GM12878 (cell line): ENCODE measurements at regions of chr7 and their contacts with region 1.

Region 1: GRCh38 chr7:149497456-149498261 is at the start of gene ZNF746:
- DNase-seq: peak; percentile 11
- ATAC-seq: peak; percentile 93
- H3K4me3 ChIP-seq: peak within 1 kb of the TSS; percentile 87
- H3K27ac ChIP-seq: peak within 1 kb of the TSS; percentile 67
- H3K4me1 ChIP-seq: peaks cover 14% of the 10 kb centered on the region
- H3K27me3 ChIP-seq: no peaks in the 10 kb centered on the region
- CTCF ChIP-seq: peak; percentile 55 to 83 (median 70)
- EP300 ChIP-seq: no peak
- POLR2A ChIP-seq: peak; percentile 76
- RAD21 ChIP-seq: peak; percentile 59
- polyA plus RNA-seq, gene ZNF746: 1.2 to 1.3 TPM

Region 2: GRCh38 chr7:149202831-149203231 is 294.8 kb before region 1 on chr7:
- CTCF ChIA-PET with region 1: no interaction called
- POLR2A ChIA-PET with region 1: no interaction called
- RAD21 ChIA-PET with region 1: no interaction called
- SMC1A ChIA-PET with region 1: no interaction called
- in situ Hi-C with region 1: no loop called
- intact Hi-C with region 1: no loop called
- DNase-seq: no peak
- ATAC-seq: no peak
- H3K4me3 ChIP-seq: no peak overlapping the region
- H3K27ac ChIP-seq: no peak overlapping the region
- H3K4me1 ChIP-seq: no peaks in the 10 kb centered on the region
- H3K27me3 ChIP-seq: no peaks in the 10 kb centered on the region
- CTCF ChIP-seq: no peak
- EP300 ChIP-seq: no peak
- POLR2A ChIP-seq: no peak
- RAD21 ChIP-seq: no peak

Region 3: DNA sequence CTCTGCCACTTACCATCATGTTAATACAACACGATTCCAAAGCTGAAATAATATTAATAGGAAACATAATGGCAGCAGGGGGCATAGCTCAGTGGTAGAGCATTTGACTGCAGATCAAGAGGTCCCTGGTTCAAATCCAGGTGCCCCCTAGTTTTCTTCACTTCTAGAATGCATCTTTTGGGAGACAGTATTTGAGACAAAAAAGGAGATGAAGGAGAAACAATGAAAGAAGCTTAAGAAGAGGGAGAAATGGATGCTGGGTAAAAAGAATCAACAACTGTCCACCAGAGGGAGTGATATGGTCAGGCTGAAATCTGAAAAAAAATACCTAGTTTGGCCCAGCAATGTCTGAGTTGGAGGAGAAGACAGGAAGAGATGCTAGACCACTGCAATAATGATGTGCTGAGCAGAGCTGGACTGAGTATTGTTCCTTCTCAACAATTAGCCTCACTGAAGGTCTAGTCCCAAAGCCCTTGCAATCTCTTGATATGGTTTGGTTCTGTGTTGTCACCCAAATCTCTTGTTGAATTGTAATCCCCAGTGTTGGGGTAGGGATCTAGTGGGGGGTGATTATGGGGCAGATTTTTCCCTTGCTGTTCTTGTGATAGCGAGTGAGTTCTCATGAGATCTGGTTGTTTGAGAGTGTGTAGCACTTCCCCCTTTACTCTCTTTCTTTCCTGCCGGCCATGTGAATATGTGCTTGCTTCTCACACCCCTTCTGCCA is 187.4 kb before region 1 on chr7:
- CTCF ChIA-PET with region 1: interaction called, 4 read pairs
- POLR2A ChIA-PET with region 1: no interaction called
- RAD21 ChIA-PET with region 1: no interaction called
- SMC1A ChIA-PET with region 1: interaction called, 7 read pairs
- in situ Hi-C with region 1: no loop called
- intact Hi-C with region 1: loop called (anchors 5 kb)
- DNase-seq: peak; percentile 36
- ATAC-seq: peak; percentile 86
- H3K4me3 ChIP-seq: no peak overlapping the region
- H3K27ac ChIP-seq: no peak overlapping the region
- H3K4me1 ChIP-seq: no peaks in the 10 kb centered on the region
- H3K27me3 ChIP-seq: no peaks in the 10 kb centered on the region
- CTCF ChIP-seq: peak; percentile 40 to 58 (median 42); a peak in 5 of 6 replicates
- EP300 ChIP-seq: no peak
- POLR2A ChIP-seq: no peak
- RAD21 ChIP-seq: peak; percentile 52

Region 4: GRCh38 chr7:149460493-149461277 is 37.0 kb before region 1 on chr7 and contains the start of gene ZNF777:
- CTCF ChIA-PET with region 1: no interaction called
- POLR2A ChIA-PET with region 1: no interaction called
- RAD21 ChIA-PET with region 1: interaction called, 3 read pairs
- SMC1A ChIA-PET with region 1: interaction called, 3 read pairs
- in situ Hi-C with region 1: no loop called
- intact Hi-C with region 1: loop called (anchors 2 kb)
- DNase-seq: peak; percentile 34
- ATAC-seq: peak; percentile 99
- H3K4me3 ChIP-seq: peak within 1 kb of the TSS; percentile 73
- H3K27ac ChIP-seq: peak within 1 kb of the TSS; percentile 54
- H3K4me1 ChIP-seq: 0 out of 2 replicates have a peak, but pooled peaks cover 6% of the 10 kb centered on the region
- H3K27me3 ChIP-seq: no peaks in the 10 kb centered on the region
- CTCF ChIP-seq: peak; percentile 47 to 66 (median 61); a peak in 5 of 6 replicates
- EP300 ChIP-seq: no peak
- POLR2A ChIP-seq: peak; percentile 83
- RAD21 ChIP-seq: no peak
- polyA plus RNA-seq, gene ZNF777: 0.03 to 0.13 TPM

Region 5: DNA sequence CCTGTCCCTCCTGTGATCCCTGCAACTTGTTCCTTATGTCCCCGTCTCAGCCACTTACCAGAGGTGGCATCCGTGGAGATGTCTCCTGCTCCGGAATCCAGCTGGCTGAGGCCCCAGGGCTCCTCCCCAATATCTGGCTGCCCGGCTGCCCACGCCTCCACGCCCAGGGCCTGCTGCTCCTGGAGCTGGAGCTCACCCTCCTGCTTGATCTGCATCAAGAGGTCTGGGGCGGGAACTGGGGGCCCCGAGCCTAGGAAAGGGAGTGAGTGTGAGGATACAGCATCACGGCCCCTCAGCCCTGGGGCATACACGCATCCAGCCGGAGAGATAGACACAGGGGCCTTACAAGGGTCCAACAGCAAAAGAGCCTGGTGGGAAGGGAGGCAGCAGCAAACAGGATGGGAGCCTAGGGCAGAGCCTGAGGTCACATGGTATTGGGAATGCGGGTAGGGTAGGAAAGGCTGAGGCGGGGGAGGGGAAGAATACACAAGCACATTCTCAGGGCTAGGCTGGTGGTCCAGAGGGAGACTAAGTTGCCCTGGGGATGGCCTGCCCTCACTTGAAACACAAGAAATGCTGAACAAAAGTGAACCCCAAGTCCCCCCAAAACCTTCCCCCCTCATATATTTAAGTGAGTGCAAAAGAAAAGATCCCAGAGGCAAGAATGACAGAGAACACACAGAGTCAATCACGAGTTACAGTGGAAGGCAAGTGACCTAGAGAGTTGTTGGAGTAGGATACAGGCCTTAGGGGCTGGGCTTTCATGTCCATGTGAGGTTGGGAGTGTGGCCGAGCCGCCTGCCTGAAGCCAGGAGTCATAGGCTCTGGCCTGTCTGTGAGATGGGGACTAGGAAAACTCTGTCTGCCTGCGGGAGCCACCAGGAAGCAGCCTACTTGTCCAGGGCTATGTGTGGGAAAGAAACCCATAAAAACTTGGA is 19.9 kb before region 1 on chr7:
- CTCF ChIA-PET with region 1: no interaction called
- POLR2A ChIA-PET with region 1: no interaction called
- RAD21 ChIA-PET with region 1: no interaction called
- SMC1A ChIA-PET with region 1: interaction called, 15 read pairs
- in situ Hi-C with region 1: no loop called
- intact Hi-C with region 1: no loop called
- DNase-seq: no peak
- ATAC-seq: no peak
- H3K4me3 ChIP-seq: no peak overlapping the region
- H3K27ac ChIP-seq: no peak overlapping the region
- H3K4me1 ChIP-seq: no peaks in the 10 kb centered on the region
- H3K27me3 ChIP-seq: no peaks in the 10 kb centered on the region
- CTCF ChIP-seq: no peak
- EP300 ChIP-seq: no peak
- POLR2A ChIP-seq: no peak
- RAD21 ChIP-seq: no peak

Region 6: GRCh38 chr7:149598721-149599306 is 101.2 kb after region 1 on chr7:
- CTCF ChIA-PET with region 1: interaction called, 7 read pairs
- POLR2A ChIA-PET with region 1: interaction called, 3 read pairs
- RAD21 ChIA-PET with region 1: no interaction called
- SMC1A ChIA-PET with region 1: interaction called, 10 read pairs
- in situ Hi-C with region 1: no loop called
- intact Hi-C with region 1: loop called (anchors 5 kb)
- DNase-seq: no peak
- ATAC-seq: peak; percentile 62
- H3K4me3 ChIP-seq: peak overlapping the region; percentile 60; the same call in 1 of the 2 replicates
- H3K27ac ChIP-seq: peak overlapping the region; percentile 93
- H3K4me1 ChIP-seq: peaks cover 21% of the 10 kb centered on the region
- H3K27me3 ChIP-seq: no peaks in the 10 kb centered on the region
- CTCF ChIP-seq: peak; percentile 49 to 64 (median 56)
- EP300 ChIP-seq: no peak
- POLR2A ChIP-seq: no peak
- RAD21 ChIP-seq: peak; percentile 85

Region 7: GRCh38 chr7:149624419-149625339 is 127.0 kb after region 1 on chr7:
- CTCF ChIA-PET with region 1: interaction called, 5 read pairs
- POLR2A ChIA-PET with region 1: no interaction called
- RAD21 ChIA-PET with region 1: interaction called, 3 read pairs
- SMC1A ChIA-PET with region 1: interaction called, 3 read pairs
- in situ Hi-C with region 1: no loop called
- intact Hi-C with region 1: loop called (anchors 2 kb)
- DNase-seq: peak; percentile 50
- ATAC-seq: peak; percentile 92
- H3K4me3 ChIP-seq: peak overlapping the region; percentile 99
- H3K27ac ChIP-seq: peak overlapping the region; percentile 74
- H3K4me1 ChIP-seq: peaks cover 24% of the 10 kb centered on the region
- H3K27me3 ChIP-seq: peaks cover 0 to 3% of the 10 kb centered on the region in 2 experiments; a peak in 2 of 4 replicates
- CTCF ChIP-seq: peak; percentile 78 to 88 (median 84)
- EP300 ChIP-seq: no peak
- POLR2A ChIP-seq: peak; percentile 97
- RAD21 ChIP-seq: peak; percentile 44